ENCODE measurements at regions of chr10 and their contacts with region 1.

Region 1: GRCh38 chr10:6185039-6185716 is 17.6 kb upstream of the PFKFB3 start:
- DNase-seq: no peak
- H3K4me3 Mint-ChIP-seq: no peak overlapping the region
- H3K27ac Mint-ChIP-seq: peak overlapping the region; percentile 64
- H3K4me1 Mint-ChIP-seq: peaks cover 32% of the 10 kb centered on the region
- H3K27me3 Mint-ChIP-seq: no peaks in the 10 kb centered on the region

Region 2: GRCh38 chr10:6144406-6145165 is 40.6 kb before region 1 on chr10:
- intact Hi-C with region 1: loop called (anchors 5 kb)
- DNase-seq: peak; percentile 98
- H3K4me3 Mint-ChIP-seq: peak overlapping the region; percentile 89
- H3K27ac Mint-ChIP-seq: peak overlapping the region; percentile 81
- H3K4me1 Mint-ChIP-seq: peaks cover 73% of the 10 kb centered on the region
- H3K27me3 Mint-ChIP-seq: no peaks in the 10 kb centered on the region

Region 3: GRCh38 chr10:6171881-6172695 is 13.1 kb before region 1 on chr10:
- intact Hi-C with region 1: loop called (anchors 2 kb)
- DNase-seq: peak; percentile 77
- H3K4me3 Mint-ChIP-seq: peak overlapping the region; percentile 74
- H3K27ac Mint-ChIP-seq: peak overlapping the region; percentile 85
- H3K4me1 Mint-ChIP-seq: peaks cover 79% of the 10 kb centered on the region
- H3K27me3 Mint-ChIP-seq: no peaks in the 10 kb centered on the region

Region 4: GRCh38 chr10:6300106-6300783 is 115.1 kb after region 1 on chr10:
- intact Hi-C with region 1: no loop called
- DNase-seq: peak; percentile 78
- H3K4me3 Mint-ChIP-seq: peak overlapping the region; percentile 73
- H3K27ac Mint-ChIP-seq: peak overlapping the region; percentile 94
- H3K4me1 Mint-ChIP-seq: peaks cover 47% of the 10 kb centered on the region
- H3K27me3 Mint-ChIP-seq: no peaks in the 10 kb centered on the region

Measured in activated CD4-positive, alpha-beta T cell treated with anti-CD3 and anti-CD28 coated beads, Interleukin-2, amount 10 ng/mL, durations not matched to agents 24 days and 14 days (primary cell).